PC-3 (cell line): ENCODE measurements at regions of chr15 and their contacts with region 1.

Region 1: DNA sequence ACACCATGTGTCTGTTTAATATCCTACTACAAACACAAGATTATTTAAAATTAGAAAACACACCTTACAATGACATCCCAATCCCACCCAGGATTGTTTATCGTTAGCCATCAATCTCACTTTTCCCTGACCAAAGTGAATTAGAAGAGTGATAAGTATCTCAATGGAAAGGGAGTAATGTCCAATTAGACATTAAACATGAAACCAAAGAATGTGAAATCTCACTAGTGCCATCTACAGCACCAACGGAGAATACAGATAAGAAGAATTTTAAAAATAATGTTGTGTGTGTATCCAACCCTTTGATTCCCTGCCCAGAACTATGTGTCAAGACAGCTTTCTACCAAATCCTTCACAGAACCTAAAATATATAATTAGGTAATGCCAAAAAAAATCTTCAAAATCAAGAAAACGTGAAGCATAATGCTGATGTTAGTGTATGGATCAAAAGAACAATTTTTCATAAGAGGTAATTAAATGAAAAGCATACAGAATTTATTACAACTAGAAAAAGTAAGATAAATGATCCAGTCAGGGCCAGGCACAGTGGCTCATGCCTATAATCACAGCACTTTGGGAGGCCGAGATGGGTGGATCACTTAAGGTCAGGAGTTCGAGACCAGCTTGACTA is 64.2 kb downstream of the SCAPER start:
- DNase-seq: peak; percentile 53
- ATAC-seq: peak; percentile 58; the same call in 1 of the 2 replicates
- H3K4me3 ChIP-seq: no peak overlapping the region
- H3K27ac ChIP-seq: no peak overlapping the region
- H3K4me1 ChIP-seq: no peaks in the 10 kb centered on the region
- H3K27me3 ChIP-seq: no peaks in the 10 kb centered on the region
- CTCF ChIP-seq: peak; percentile 79

Region 2: GRCh38 chr15:76235186-76235826 is 605.6 kb before region 1 on chr15:
- CTCF ChIA-PET with region 1: no interaction called
- POLR2A ChIA-PET with region 1: no interaction called
- intact Hi-C with region 1: loop called (anchors 1 kb)
- DNase-seq: peak; percentile 73
- ATAC-seq: peak; percentile 89
- H3K4me3 ChIP-seq: no peak overlapping the region
- H3K27ac ChIP-seq: no peak overlapping the region
- H3K4me1 ChIP-seq: no peaks in the 10 kb centered on the region
- H3K27me3 ChIP-seq: no peaks in the 10 kb centered on the region
- CTCF ChIP-seq: peak; percentile 76